Panc1 (cell line): ENCODE measurements at regions of chr1 and their contacts with region 1.

Region 1: GRCh38 chr1:2435091-2435490 is 22.7 kb upstream of the PEX10 start:
- DNase-seq: no peak
- ATAC-seq: no peak
- H3K4me3 ChIP-seq: no peak overlapping the region
- H3K27ac ChIP-seq: no peak overlapping the region
- H3K4me1 ChIP-seq: peaks cover 3% of the 10 kb centered on the region; the same call in 1 of the 2 replicates
- H3K27me3 ChIP-seq: no peaks in the 10 kb centered on the region
- CTCF ChIP-seq: no peak

Region 2: DNA sequence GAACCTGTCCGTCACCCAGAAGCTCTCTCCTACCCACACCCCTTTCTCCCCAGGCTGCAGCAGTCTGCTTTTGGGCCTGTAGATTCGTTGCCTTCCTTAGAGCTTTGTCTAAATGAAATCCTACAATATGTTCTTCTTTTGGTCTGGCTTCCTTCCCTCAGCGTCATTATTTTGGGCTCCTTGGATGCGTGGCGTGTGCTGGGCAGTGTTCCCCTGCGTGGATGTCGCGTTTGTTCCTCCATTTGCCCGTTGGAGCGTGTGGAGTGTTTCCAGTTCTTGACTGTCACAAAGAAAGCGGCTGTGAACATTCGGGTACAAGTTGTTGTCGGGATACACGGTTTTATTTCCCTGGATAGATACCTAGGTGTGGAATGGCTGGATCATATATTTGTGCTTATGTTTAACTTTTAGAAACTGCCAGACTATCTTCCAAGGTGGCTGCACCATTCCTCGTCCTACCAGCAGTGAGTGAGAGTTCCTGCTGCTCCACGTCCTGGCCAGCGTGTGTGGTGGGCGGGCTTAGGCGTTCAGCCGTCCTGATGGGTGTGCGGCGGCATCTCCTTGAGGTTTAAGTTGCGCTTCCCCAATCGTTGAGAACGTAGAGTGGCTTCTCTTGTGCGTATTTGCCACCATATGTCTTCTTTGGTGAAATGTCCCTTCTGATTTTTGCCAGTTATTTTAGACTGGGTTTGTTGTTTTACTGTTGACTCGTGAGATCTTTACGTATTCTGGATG is 175.3 kb before region 1 on chr1:
- CTCF ChIA-PET with region 1: no interaction called
- POLR2A ChIA-PET with region 1: no interaction called
- in situ Hi-C with region 1: no loop called
- intact Hi-C with region 1: no loop called
- DNase-seq: no peak
- ATAC-seq: no peak
- H3K4me3 ChIP-seq: no peak overlapping the region
- H3K27ac ChIP-seq: no peak overlapping the region
- H3K4me1 ChIP-seq: peaks cover 16% of the 10 kb centered on the region
- H3K27me3 ChIP-seq: no peaks in the 10 kb centered on the region
- CTCF ChIP-seq: no peak

Region 3: DNA sequence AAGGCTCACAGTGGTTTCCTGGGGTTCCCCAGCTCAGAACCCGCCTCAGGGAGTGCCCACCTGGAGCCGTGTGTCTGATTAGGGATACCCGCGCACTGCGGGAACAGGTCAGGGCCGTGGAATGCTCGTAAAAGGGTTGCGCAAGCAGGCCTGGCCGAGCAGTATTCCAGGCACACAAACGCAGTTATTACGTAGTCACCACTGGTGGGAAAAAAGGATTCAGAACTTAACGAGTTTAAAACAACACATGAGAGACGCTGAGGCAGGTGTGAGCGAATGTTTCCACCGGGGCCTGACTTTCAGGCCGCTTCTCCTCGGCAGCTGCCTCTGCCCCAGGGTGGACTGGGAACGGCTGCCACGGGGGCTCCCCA is 59.2 kb after region 1 on chr1:
- CTCF ChIA-PET with region 1: no interaction called
- POLR2A ChIA-PET with region 1: no interaction called
- in situ Hi-C with region 1: no loop called
- intact Hi-C with region 1: no loop called
- DNase-seq: peak; percentile 45
- ATAC-seq: peak; percentile 71
- H3K4me3 ChIP-seq: no peak overlapping the region
- H3K27ac ChIP-seq: peak overlapping the region; percentile 48; the same call in 1 of the 2 replicates
- H3K4me1 ChIP-seq: peaks cover 22% of the 10 kb centered on the region
- H3K27me3 ChIP-seq: no peaks in the 10 kb centered on the region
- CTCF ChIP-seq: no peak

Region 4: GRCh38 chr1:2561898-2562545 is 126.9 kb after region 1 on chr1:
- CTCF ChIA-PET with region 1: no interaction called
- POLR2A ChIA-PET with region 1: interaction called, 11 read pairs
- in situ Hi-C with region 1: no loop called
- intact Hi-C with region 1: no loop called
- DNase-seq: no peak
- ATAC-seq: no peak; the same call in 1 of the 2 replicates
- H3K4me3 ChIP-seq: no peak overlapping the region
- H3K27ac ChIP-seq: no peak overlapping the region
- H3K4me1 ChIP-seq: peaks cover 4% of the 10 kb centered on the region
- H3K27me3 ChIP-seq: no peaks in the 10 kb centered on the region
- CTCF ChIP-seq: no peak; the same call in 1 of the 2 replicates